Activated CD4-positive, alpha-beta T cell treated with anti-CD3 and anti-CD28 coated beads, Interleukin-2, amount 10 ng/mL, durations not matched to agents 24 days and 14 days (primary cell): ENCODE measurements at regions of chr13 and their contacts with region 1.

Region 1: DNA sequence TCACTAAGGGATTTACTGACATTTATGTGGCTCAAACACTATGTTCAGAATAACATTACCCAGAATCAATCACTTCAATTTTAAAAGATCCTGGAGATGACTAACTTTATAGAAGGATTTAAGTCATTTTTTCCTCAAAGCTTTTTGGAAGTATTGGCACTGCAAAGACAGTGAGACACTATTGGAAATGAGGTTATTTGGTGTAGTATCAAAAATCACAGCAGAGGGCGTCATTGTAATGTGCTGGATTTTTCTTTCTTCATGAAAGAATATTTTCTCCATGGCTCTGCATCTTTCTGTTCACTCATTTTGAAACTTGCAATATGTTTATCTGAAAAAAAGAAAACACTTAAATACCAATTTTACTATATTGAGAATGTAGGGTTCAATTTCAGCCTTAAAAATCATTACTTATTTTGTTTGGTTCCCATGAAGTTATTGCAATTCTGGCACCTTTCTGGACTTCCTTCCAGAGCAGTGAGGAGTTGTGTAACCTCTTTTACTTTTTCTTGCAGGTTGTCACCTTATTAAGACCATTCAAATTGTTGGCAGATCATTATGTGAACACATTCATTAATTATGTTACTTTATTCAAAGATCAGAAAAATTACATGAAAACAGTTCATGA is 3.7 kb upstream of the CSNK1A1L start:
- DNase-seq: no peak
- H3K4me3 Mint-ChIP-seq: no peak overlapping the region
- H3K27ac Mint-ChIP-seq: no peak overlapping the region
- H3K4me1 Mint-ChIP-seq: no peaks in the 10 kb centered on the region
- H3K27me3 Mint-ChIP-seq: no peaks in the 10 kb centered on the region

Region 2: DNA sequence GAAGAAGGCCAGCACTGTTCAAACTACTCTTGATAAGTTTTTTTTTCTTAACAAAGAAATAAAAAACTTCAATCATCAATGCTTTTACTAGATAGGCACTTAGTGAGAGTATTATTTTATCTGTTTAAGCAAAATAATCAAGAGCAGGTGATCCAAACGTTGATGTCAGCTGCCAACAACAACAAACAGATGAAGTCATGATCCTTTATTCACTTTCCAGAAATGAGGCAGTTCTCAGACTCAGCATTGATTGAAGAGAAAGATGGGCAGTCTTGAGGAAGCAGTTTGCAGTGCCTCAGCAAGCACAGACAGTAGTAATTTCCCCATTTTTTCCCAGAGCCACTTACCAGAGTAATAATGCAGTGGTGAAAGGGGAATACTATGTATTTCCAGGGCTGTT is 34.7 kb after region 1 on chr13:
- intact Hi-C with region 1: no loop called
- DNase-seq: no peak
- H3K4me3 Mint-ChIP-seq: no peak overlapping the region
- H3K27ac Mint-ChIP-seq: no peak overlapping the region
- H3K4me1 Mint-ChIP-seq: no peaks in the 10 kb centered on the region
- H3K27me3 Mint-ChIP-seq: no peaks in the 10 kb centered on the region

Region 3: GRCh38 chr13:38530492-38530891 is 1421.3 kb after region 1 on chr13:
- intact Hi-C with region 1: loop called (anchors 5 kb)
- DNase-seq: no peak
- H3K4me3 Mint-ChIP-seq: no peak overlapping the region
- H3K27ac Mint-ChIP-seq: no peak overlapping the region
- H3K4me1 Mint-ChIP-seq: no peaks in the 10 kb centered on the region
- H3K27me3 Mint-ChIP-seq: no peaks in the 10 kb centered on the region